Activated CD4-positive, alpha-beta T cell treated with anti-CD3 and anti-CD28 coated beads, Interleukin-2, amount 10 ng/mL, durations not matched to agents 24 days and 14 days (primary cell): ENCODE measurements at regions of chr19 and their contacts with region 1.

Region 1: GRCh38 chr19:13747098-13747453 is 17.2 kb upstream of the MRI1 start:
- DNase-seq: no peak
- H3K4me3 Mint-ChIP-seq: peak overlapping the region; percentile 92
- H3K27ac Mint-ChIP-seq: peak overlapping the region; percentile 92
- H3K4me1 Mint-ChIP-seq: peaks cover 17% of the 10 kb centered on the region
- H3K27me3 Mint-ChIP-seq: no peaks in the 10 kb centered on the region

Region 2: GRCh38 chr19:13691569-13692435 is 55.3 kb before region 1 on chr19:
- intact Hi-C with region 1: no loop called
- DNase-seq: no peak
- H3K4me3 Mint-ChIP-seq: no peak overlapping the region
- H3K27ac Mint-ChIP-seq: no peak overlapping the region
- H3K4me1 Mint-ChIP-seq: no peaks in the 10 kb centered on the region
- H3K27me3 Mint-ChIP-seq: no peaks in the 10 kb centered on the region

Region 3: GRCh38 chr19:13731147-13731964 is 15.7 kb before region 1 on chr19:
- intact Hi-C with region 1: loop called (anchors 1 kb)
- DNase-seq: peak; percentile 99
- H3K4me3 Mint-ChIP-seq: peak overlapping the region; percentile 89
- H3K27ac Mint-ChIP-seq: peak overlapping the region; percentile 95
- H3K4me1 Mint-ChIP-seq: peaks cover 19% of the 10 kb centered on the region
- H3K27me3 Mint-ChIP-seq: no peaks in the 10 kb centered on the region